Dendritic cell treated with granulocyte-macrophage colony-stimulating factor and Interleukin-4, amounts not matched to agents 40 ng/mL and 50 ng/mL, for 4 days (primary cell): ENCODE measurements at regions of chr7 and their contacts with region 1.

Region 1: DNA sequence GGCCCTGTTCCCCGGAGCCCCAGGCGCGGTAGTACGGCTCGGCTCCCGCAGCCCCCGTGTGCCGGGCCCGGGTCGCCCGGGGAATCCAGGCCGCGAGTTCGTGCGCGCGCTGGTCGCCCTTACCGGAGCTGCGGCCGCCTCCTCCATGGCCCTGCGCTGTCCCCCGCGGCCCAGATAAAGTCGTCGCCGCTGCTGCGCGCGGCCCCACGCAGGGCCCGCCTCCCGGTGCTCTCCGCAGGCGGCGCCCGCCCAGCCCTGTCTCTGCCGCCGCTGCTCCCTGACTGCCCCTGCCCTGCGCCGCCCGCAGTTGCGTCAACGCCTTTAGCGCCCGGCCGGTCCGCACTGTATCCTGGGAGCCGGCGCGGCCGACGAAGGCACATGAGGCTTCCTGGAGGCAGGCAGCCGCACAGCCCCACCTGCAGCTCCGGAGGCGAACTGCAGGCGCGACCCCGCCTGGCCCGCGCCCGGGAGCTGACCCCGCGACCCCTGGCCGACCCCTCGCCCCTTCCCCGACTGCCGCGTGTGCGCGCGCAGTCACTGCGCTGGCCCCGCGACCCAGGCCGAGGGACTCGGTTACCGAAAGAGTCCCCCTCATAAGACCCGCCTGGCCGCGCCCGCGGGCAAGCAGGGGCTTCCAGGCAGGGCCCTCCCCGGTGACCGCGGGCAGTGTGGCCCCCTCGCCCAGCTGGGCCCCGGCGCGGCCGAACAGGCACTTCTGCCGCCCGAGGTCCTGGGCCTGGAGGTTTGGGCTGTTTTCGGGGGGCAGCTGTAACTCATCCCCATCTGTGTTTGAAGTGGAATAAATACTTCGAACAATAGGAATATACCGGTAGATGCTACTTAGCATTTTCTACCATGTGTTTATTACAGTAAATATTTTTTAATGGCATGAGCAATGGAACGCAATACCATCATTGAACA is 127.1 kb upstream of the ZNF746 start:
- H3K4me3 Mint-ChIP-seq: peak overlapping the region; percentile 95
- H3K27ac Mint-ChIP-seq: peak overlapping the region; percentile 93
- H3K4me1 Mint-ChIP-seq: peaks cover 37% of the 10 kb centered on the region
- H3K27me3 Mint-ChIP-seq: peaks cover 2% of the 10 kb centered on the region

Region 2: GRCh38 chr7:149229526-149229925 is 395.2 kb before region 1 on chr7:
- intact Hi-C with region 1: no loop called
- H3K4me3 Mint-ChIP-seq: no peak overlapping the region
- H3K27ac Mint-ChIP-seq: no peak overlapping the region
- H3K4me1 Mint-ChIP-seq: peaks cover 8% of the 10 kb centered on the region
- H3K27me3 Mint-ChIP-seq: peaks cover 8% of the 10 kb centered on the region

Region 3: DNA sequence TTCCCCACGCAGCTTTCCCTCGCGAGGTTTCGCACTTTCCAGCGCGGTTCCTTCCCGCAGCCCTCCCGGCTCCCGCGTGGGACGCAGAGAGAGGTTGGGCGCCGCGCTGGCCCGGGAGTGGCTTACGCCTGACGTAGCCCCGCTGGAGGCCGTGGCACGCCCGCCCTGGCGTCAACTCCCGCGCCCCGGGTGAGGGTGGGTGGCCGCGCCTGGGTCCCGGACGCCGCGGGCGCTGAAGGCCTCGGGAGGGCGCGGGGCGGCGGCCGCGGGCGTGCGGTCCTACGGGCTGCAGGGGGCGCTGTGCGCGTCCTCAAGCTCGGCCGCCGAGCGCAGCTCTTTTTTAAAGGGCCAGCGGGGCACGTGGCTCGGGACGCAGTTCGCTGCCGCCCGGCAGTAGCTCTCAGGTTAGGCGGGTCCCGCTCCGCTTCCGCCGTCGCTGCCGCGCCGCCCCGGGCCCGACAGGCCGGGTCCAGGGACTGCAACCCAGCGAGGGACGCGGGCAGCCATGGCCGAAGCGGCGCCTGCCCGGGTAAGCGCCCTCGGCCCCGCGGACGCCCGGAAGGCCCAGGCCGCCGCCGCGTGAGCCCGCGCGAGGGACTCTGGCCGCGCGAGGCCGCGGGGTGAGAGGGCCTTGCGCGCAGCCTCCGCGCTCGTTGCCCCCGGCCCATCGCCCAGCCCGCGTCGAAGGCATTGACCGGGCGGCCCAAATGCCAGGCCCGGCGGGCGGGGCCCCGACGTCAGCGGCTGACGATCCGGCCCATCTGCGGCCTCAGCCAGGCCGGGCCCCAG is 362.7 kb before region 1 on chr7 and contains the start of gene ZNF783:
- intact Hi-C with region 1: loop called (anchors 2 kb)
- H3K4me3 Mint-ChIP-seq: peak within 1 kb of the TSS; percentile 90
- H3K27ac Mint-ChIP-seq: peak within 1 kb of the TSS; percentile 89
- H3K4me1 Mint-ChIP-seq: peaks cover 32% of the 10 kb centered on the region
- H3K27me3 Mint-ChIP-seq: no peaks in the 10 kb centered on the region

Region 4: DNA sequence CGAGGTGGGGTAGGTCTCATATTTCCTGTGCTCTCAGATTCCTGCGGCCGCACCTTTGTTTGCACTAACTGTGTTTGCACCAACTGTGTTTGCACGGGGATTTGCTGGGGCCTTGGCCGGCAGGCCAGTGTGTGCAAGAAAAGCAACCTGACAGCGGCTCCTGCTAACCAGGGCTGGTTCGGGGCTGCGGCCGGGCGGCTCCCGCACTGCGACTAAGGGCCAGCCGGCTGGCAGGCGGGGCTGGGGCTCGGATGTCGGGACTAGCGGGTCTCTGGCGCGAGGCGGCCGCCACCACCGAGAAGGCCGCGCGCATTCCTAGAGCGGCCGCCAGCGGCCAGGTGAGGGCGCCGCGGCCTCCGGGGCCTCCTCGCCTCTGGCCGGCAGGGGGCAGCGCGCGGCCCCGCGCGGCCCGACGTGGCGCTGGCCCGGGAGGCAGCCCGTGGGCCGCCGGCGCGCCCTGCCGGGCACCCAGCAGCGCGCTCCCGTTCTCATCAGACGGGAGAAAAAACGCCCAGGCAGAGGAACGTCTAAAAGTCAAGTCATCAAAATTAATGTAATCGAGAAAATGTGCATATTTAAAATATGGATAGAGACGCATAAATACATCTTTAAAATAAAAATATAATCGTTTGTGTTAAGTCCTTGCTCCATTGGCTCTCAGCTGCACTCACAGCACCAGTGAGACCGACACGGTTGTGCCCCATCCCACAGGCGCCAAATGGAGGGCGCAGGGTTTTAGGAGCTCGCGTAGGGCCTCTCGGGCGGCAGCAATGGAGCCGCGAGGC is 202.4 kb before region 1 on chr7:
- intact Hi-C with region 1: loop called (anchors 2 kb)
- H3K4me3 Mint-ChIP-seq: peak overlapping the region; percentile 72
- H3K27ac Mint-ChIP-seq: peak overlapping the region; percentile 56
- H3K4me1 Mint-ChIP-seq: peaks cover 15% of the 10 kb centered on the region
- H3K27me3 Mint-ChIP-seq: peaks cover 26% of the 10 kb centered on the region